Activated CD4-positive, alpha-beta memory T cell treated with anti-CD3 and anti-CD28 coated beads for 36 hours (primary cell): ENCODE measurements at regions of chr1 and their contacts with region 1.

Region 1: GRCh38 chr1:76154206-76154956 is 79.8 kb downstream of the ST6GALNAC3 start:
- DNase-seq: peak; percentile 87
- H3K4me3 Mint-ChIP-seq: peak overlapping the region; percentile 74
- H3K27ac Mint-ChIP-seq: peak overlapping the region; percentile 58
- H3K4me1 Mint-ChIP-seq: peaks cover 2% of the 10 kb centered on the region
- H3K27me3 Mint-ChIP-seq: no peaks in the 10 kb centered on the region

Region 2: GRCh38 chr1:75969550-75969949 is 184.8 kb before region 1 on chr1:
- CTCF ChIA-PET with region 1: no interaction called
- POLR2A ChIA-PET with region 1: no interaction called
- intact Hi-C with region 1: no loop called
- DNase-seq: no peak
- H3K4me3 Mint-ChIP-seq: no peak overlapping the region
- H3K27ac Mint-ChIP-seq: no peak overlapping the region
- H3K4me1 Mint-ChIP-seq: no peaks in the 10 kb centered on the region
- H3K27me3 Mint-ChIP-seq: peaks cover 6% of the 10 kb centered on the region

Region 3: GRCh38 chr1:76274302-76274701 is 119.9 kb after region 1 on chr1:
- CTCF ChIA-PET with region 1: no interaction called
- POLR2A ChIA-PET with region 1: no interaction called
- intact Hi-C with region 1: no loop called
- DNase-seq: no peak
- H3K4me3 Mint-ChIP-seq: no peak overlapping the region
- H3K27ac Mint-ChIP-seq: no peak overlapping the region
- H3K4me1 Mint-ChIP-seq: peaks cover 22% of the 10 kb centered on the region
- H3K27me3 Mint-ChIP-seq: no peaks in the 10 kb centered on the region

Region 4: GRCh38 chr1:76294482-76295194 is 140.3 kb after region 1 on chr1:
- CTCF ChIA-PET with region 1: interaction called, 8 read pairs
- POLR2A ChIA-PET with region 1: no interaction called
- intact Hi-C with region 1: loop called (anchors 1 kb)
- DNase-seq: no peak
- H3K4me3 Mint-ChIP-seq: peak overlapping the region; percentile 50
- H3K27ac Mint-ChIP-seq: peak overlapping the region; percentile 47
- H3K4me1 Mint-ChIP-seq: peaks cover 67% of the 10 kb centered on the region
- H3K27me3 Mint-ChIP-seq: no peaks in the 10 kb centered on the region

Region 5: DNA sequence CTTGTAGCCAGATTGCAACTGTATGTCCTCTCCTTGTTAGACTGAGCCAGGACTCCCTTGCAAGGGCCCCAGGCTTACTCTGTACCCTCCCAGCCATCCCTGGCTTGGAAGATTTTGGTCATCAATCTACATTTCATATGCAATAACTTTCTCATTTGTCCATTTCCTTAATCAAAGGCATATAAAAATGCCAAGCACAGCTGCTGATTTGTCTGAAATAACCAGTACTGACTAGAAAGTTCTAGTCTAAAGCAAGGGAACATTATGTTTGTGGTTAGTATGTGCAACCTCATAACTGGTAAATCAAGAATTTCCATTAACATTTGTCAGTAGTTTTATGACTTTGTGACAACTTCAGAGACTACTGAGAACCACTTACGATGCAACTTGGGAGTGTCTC is 290.4 kb after region 1 on chr1:
- CTCF ChIA-PET with region 1: no interaction called
- POLR2A ChIA-PET with region 1: no interaction called
- intact Hi-C with region 1: loop called (anchors 10 kb)
- DNase-seq: no peak
- H3K4me3 Mint-ChIP-seq: no peak overlapping the region
- H3K27ac Mint-ChIP-seq: no peak overlapping the region
- H3K4me1 Mint-ChIP-seq: peaks cover 8% of the 10 kb centered on the region
- H3K27me3 Mint-ChIP-seq: no peaks in the 10 kb centered on the region

Region 6: DNA sequence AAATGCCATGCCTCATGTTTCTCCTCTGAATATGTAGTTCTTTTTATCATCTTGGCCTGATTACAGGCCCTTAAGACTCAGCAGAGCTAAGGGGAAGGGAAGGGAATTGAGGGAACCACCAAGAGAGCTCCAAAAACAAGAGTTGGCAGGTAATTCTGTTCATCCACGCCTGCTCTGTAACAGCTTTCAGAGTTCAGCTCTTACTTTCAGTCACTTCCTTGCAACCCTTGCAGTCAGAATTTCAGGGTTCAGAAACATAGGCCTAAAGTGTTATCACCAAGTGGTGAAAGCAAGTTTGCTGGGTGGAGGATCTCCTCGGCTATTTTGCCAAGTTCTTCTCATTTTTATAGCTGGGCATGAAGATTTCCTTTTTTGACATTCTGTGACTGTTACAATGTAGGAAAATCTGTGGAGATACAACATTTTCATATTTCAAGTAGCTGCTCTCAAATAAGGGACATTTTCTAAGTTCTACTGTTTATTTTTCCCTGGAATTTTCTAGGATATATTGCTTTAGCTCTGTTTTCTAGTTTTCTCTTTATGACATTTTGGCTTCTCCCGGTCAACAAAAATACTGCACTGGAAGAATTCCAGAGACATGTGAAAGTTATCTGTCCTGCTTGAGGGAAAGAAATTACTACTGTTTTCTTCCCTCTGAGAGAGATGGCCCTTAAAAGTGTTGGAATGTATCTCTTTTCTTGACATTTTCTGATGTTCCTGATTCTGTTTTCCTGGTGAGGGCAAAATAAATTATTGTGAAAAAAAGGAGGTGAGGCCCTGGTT is 461.1 kb after region 1 on chr1:
- CTCF ChIA-PET with region 1: no interaction called
- POLR2A ChIA-PET with region 1: no interaction called
- intact Hi-C with region 1: no loop called
- DNase-seq: no peak
- H3K4me3 Mint-ChIP-seq: no peak overlapping the region
- H3K27ac Mint-ChIP-seq: no peak overlapping the region
- H3K4me1 Mint-ChIP-seq: no peaks in the 10 kb centered on the region
- H3K27me3 Mint-ChIP-seq: no peaks in the 10 kb centered on the region

Region 7: DNA sequence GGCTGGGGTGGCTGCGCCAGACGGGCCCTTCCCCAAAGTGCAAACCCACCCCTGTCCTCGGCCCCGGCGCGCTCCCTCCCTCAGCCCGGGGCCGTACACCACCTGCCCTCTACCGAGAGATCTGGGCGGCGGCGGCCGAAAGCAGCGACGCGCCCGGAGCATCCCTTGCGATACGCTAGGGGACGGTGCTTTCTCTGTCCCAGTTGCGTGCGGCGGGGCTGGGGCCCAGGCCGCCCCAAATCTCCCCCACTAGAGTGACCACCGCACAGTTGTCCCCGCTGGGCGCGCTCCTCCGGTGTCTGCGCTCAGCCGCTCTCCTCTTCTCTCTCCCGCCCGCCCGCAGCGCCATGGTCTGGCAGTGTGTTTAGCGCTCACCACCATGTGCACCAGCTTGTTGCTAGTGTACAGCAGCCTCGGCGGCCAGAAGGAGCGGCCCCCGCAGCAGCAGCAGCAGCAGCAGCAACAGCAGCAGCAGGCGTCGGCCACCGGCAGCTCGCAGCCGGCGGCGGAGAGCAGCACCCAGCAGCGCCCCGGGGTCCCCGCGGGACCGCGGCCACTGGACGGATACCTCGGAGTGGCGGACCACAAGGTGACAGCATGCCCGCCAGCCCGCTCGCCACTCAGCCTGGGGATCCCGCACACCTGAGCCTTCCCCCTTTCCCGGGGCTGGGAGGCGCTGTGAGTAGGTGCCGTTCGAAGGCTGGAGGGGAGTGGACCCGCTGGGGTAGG is 713.9 kb after region 1 on chr1:
- CTCF ChIA-PET with region 1: no interaction called
- POLR2A ChIA-PET with region 1: no interaction called
- intact Hi-C with region 1: loop called (anchors 1 kb)
- DNase-seq: peak; percentile 40
- H3K4me3 Mint-ChIP-seq: peak overlapping the region; percentile 57
- H3K27ac Mint-ChIP-seq: no peak overlapping the region
- H3K4me1 Mint-ChIP-seq: peaks cover 8% of the 10 kb centered on the region
- H3K27me3 Mint-ChIP-seq: peaks cover 57% of the 10 kb centered on the region

Region 8: DNA sequence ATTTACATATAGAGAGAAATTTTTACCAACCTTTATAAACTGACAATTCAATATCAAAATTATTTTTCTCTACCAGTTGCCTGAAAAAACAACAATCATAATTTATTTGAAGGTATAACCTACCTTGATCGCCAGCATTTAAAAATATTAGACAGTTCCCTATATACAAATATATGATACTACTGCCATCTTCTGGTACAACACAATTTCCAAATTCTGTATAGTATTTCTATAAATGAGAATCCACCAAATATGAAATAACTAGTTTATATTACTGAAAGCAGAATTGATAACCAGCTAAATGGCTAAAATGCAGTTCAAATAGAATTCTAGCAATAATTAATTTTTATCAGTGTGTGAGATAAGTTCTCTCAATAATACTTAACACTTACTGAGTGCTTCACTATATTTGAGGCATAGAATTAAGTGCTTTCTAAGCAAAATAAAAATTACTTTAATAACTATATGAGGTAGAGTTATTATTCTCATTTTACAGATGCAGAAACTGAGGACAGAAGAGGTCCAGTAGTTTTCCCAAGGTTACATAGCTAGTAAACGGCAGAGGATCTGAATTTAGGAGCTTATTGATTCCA is 989.2 kb after region 1 on chr1:
- CTCF ChIA-PET with region 1: interaction called, 5 read pairs
- POLR2A ChIA-PET with region 1: no interaction called
- intact Hi-C with region 1: loop called (anchors 1 kb)
- DNase-seq: no peak
- H3K4me3 Mint-ChIP-seq: no peak overlapping the region
- H3K27ac Mint-ChIP-seq: no peak overlapping the region
- H3K4me1 Mint-ChIP-seq: no peaks in the 10 kb centered on the region
- H3K27me3 Mint-ChIP-seq: no peaks in the 10 kb centered on the region

Region 9: GRCh38 chr1:78114034-78114956 is 1959.9 kb after region 1 on chr1:
- CTCF ChIA-PET with region 1: no interaction called
- POLR2A ChIA-PET with region 1: no interaction called
- intact Hi-C with region 1: loop called (anchors 10 kb)
- DNase-seq: peak; percentile 69
- H3K4me3 Mint-ChIP-seq: no peak overlapping the region
- H3K27ac Mint-ChIP-seq: no peak overlapping the region
- H3K4me1 Mint-ChIP-seq: no peaks in the 10 kb centered on the region
- H3K27me3 Mint-ChIP-seq: no peaks in the 10 kb centered on the region